Psoas muscle (tissue), 8 donors: ENCODE measurements at regions of chr4 and their contacts with region 1.

Region 1: GRCh38 chr4:56799824-56800756 is 21.4 kb downstream of the SPINK2 start:
- DNase-seq: peak; percentile 77 to 87
- ATAC-seq: peak; percentile 94 to 100 (median 98)
- H3K4me3 ChIP-seq: peak overlapping the region; percentile 71
- H3K27ac ChIP-seq: peak overlapping the region; percentile 7
- H3K4me1 ChIP-seq: no peaks in the 10 kb centered on the region
- H3K27me3 ChIP-seq: no peaks in the 10 kb centered on the region
- CTCF ChIP-seq: peak; percentile 94

Region 2: DNA sequence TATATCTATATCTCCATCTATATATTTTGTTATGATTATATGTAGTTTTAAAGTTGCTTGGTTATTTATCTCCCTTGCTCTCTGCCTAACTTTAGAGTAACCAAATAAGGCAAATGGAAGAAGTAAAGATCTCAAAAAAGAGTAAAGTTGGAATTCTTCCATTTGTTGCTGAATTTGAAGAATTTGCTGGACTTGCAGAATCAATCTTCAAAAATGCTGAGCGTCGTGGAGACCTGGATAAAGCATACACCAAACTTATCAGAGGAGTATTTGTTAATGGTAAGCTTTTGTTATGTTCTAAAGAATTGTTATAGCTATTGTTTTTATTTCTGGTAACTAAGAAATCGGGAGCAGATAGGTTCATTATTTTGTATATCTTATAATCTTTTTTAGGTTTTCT is 903.5 kb before region 1 on chr4:
- intact Hi-C with region 1: no loop called
- DNase-seq: no peak
- ATAC-seq: no peak
- H3K4me3 ChIP-seq: no peak overlapping the region
- H3K27ac ChIP-seq: no peak overlapping the region
- H3K4me1 ChIP-seq: no peaks in the 10 kb centered on the region
- H3K27me3 ChIP-seq: no peaks in the 10 kb centered on the region
- CTCF ChIP-seq: no peak

Region 3: GRCh38 chr4:56626963-56627362 is 173.1 kb before region 1 on chr4:
- intact Hi-C with region 1: loop called in 1 of 2 experiments (anchors 10 kb)
- DNase-seq: no peak
- ATAC-seq: no peak
- H3K4me3 ChIP-seq: no peak overlapping the region
- H3K27ac ChIP-seq: no peak overlapping the region
- H3K4me1 ChIP-seq: no peaks in the 10 kb centered on the region
- H3K27me3 ChIP-seq: no peaks in the 10 kb centered on the region
- CTCF ChIP-seq: peak; percentile 29

Region 4: DNA sequence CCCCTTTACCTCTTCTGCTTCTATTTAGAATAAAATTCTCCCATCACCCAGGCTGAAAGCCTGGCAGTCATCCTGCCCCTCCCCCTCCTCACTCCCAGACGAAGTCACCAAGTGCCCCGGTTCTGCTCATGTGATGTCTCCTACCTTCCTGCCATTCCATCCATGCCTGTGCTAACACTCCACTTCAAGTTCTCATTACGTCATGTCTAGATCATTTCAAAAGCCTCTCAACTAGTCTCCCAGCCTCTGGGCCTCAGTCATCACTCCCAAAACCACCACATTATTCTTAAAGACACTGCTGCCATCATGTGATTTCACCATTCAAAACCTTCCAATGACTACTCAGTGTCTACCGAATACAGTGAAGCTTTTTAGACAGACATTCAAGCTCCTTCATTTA is 101.8 kb before region 1 on chr4:
- intact Hi-C with region 1: no loop called
- DNase-seq: no peak
- ATAC-seq: no peak
- H3K4me3 ChIP-seq: no peak overlapping the region
- H3K27ac ChIP-seq: no peak overlapping the region
- H3K4me1 ChIP-seq: no peaks in the 10 kb centered on the region
- H3K27me3 ChIP-seq: no peaks in the 10 kb centered on the region
- CTCF ChIP-seq: no peak